Activated CD4-positive, alpha-beta memory T cell treated with anti-CD3 and anti-CD28 coated beads for 36 hours (primary cell): ENCODE measurements at regions of chr12 and their contacts with region 1.

Region 1: GRCh38 chr12:8045952-8046944 is 13.7 kb downstream of the FOXJ2 start:
- DNase-seq: peak; percentile 88
- H3K4me3 Mint-ChIP-seq: no peak overlapping the region
- H3K27ac Mint-ChIP-seq: peak overlapping the region; percentile 45
- H3K4me1 Mint-ChIP-seq: peaks cover 18% of the 10 kb centered on the region
- H3K27me3 Mint-ChIP-seq: no peaks in the 10 kb centered on the region

Region 2: DNA sequence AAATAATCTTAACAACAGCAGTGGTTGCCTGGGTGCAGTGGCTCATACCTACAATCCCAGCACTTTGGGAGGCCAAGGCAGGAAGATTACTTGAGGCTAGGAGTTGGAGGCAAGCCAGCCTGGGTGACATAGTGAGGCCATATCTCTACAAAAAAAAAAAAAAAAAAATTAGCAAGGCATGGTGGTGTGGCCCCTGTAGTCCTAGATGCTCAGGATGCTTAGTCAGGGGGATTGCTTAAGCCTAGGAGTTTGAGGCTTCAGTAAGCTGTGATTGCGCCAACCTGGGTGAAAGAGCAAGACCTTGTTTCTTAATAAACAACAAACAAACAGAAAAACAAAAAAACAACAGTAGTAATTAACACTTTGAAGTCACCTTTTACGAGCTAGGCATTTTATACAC is 743.0 kb before region 1 on chr12:
- CTCF ChIA-PET with region 1: no interaction called
- POLR2A ChIA-PET with region 1: no interaction called
- intact Hi-C with region 1: no loop called
- DNase-seq: no peak
- H3K4me3 Mint-ChIP-seq: no peak overlapping the region
- H3K27ac Mint-ChIP-seq: no peak overlapping the region
- H3K4me1 Mint-ChIP-seq: no peaks in the 10 kb centered on the region
- H3K27me3 Mint-ChIP-seq: peaks cover 6% of the 10 kb centered on the region

Region 3: GRCh38 chr12:8032242-8033152 is 13.8 kb before region 1 on chr12 and contains the start of gene FOXJ2:
- CTCF ChIA-PET with region 1: interaction called, 12 read pairs
- POLR2A ChIA-PET with region 1: no interaction called
- intact Hi-C with region 1: no loop called
- DNase-seq: peak; percentile 83
- H3K4me3 Mint-ChIP-seq: peak within 1 kb of the TSS; percentile 84
- H3K27ac Mint-ChIP-seq: peak within 1 kb of the TSS; percentile 88
- H3K4me1 Mint-ChIP-seq: peaks cover 51% of the 10 kb centered on the region
- H3K27me3 Mint-ChIP-seq: no peaks in the 10 kb centered on the region
- total RNA-seq, gene FOXJ2: 16.7 to 17.1 TPM

Region 4: DNA sequence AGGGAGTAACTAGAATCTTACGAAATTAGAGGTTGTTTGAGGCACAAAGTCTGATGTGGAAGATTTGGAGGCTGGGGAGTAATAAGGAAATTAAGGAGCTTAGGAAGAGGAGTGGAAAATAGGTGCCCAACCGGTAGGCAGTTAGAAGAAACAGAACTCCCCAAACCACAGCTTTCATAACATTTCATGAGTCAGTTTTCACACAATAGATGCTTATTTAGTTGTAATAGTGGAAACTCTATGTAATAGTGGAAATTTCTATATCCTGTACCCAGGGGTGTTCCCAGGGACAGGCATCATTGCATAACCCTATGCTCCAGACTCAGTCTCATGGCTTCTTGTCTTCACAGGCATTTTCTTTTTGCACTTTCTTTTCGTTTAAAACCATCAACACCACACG is 11.6 kb after region 1 on chr12:
- CTCF ChIA-PET with region 1: interaction called, 27 read pairs
- POLR2A ChIA-PET with region 1: no interaction called
- intact Hi-C with region 1: no loop called
- DNase-seq: no peak
- H3K4me3 Mint-ChIP-seq: no peak overlapping the region
- H3K27ac Mint-ChIP-seq: no peak overlapping the region
- H3K4me1 Mint-ChIP-seq: peaks cover 16% of the 10 kb centered on the region
- H3K27me3 Mint-ChIP-seq: no peaks in the 10 kb centered on the region

Region 5: DNA sequence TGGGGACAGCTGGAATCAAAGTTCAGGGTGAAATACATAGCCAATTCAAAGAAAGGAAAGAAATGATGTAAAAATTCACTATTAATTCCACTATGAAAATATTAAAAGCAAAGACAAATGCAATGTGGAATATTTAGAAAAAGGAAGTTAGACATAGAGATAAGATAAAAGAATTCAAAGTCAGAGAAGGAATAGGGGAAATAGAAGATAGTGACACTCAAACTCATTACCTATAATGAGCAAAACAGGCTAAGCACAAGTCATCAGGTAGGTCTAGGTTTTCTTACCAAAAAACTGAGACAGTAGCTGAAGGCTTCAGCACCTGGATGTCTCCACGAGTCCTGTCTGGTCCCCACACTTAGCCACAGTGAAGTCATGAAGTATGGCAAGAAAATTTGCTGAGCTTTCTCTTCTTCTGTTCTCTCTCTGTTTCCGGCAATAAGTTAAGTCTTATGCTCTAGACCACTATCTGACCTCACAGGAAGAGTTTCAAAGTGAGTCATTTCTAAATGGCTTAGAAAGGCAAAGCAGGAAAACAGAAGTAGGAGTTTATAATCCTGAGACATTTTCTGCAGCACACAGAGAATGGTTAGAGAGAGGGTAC is 19.8 kb after region 1 on chr12 and contains the start of gene C3AR1:
- CTCF ChIA-PET with region 1: interaction called, 18 read pairs
- POLR2A ChIA-PET with region 1: interaction called, 3 read pairs
- intact Hi-C with region 1: loop called (anchors 1 kb)
- DNase-seq: peak; percentile 55
- H3K4me3 Mint-ChIP-seq: peak within 1 kb of the TSS; percentile 31
- H3K27ac Mint-ChIP-seq: peak within 1 kb of the TSS; percentile 63
- H3K4me1 Mint-ChIP-seq: peaks cover 40% of the 10 kb centered on the region
- H3K27me3 Mint-ChIP-seq: no peaks in the 10 kb centered on the region
- total RNA-seq, gene C3AR1: 0.94 to 0.97 TPM